Activated CD8-positive, alpha-beta T cell treated with anti-CD3 and anti-CD28 coated beads, Interleukin-2, amount 10 ng/mL, durations not matched to agents 7 days and 5 days (primary cell): ENCODE measurements at regions of chr2 and their contacts with region 1.

Region 1: GRCh38 chr2:112481050-112481527 is 867 bp upstream of the TTL start:
- DNase-seq: peak; percentile 90
- ATAC-seq: peak; percentile 84
- H3K4me3 Mint-ChIP-seq: peak overlapping the region; percentile 85
- H3K27ac Mint-ChIP-seq: peak overlapping the region; percentile 87
- H3K4me1 Mint-ChIP-seq: peaks cover 19% of the 10 kb centered on the region
- H3K27me3 Mint-ChIP-seq: peaks cover 2% of the 10 kb centered on the region

Region 2: DNA sequence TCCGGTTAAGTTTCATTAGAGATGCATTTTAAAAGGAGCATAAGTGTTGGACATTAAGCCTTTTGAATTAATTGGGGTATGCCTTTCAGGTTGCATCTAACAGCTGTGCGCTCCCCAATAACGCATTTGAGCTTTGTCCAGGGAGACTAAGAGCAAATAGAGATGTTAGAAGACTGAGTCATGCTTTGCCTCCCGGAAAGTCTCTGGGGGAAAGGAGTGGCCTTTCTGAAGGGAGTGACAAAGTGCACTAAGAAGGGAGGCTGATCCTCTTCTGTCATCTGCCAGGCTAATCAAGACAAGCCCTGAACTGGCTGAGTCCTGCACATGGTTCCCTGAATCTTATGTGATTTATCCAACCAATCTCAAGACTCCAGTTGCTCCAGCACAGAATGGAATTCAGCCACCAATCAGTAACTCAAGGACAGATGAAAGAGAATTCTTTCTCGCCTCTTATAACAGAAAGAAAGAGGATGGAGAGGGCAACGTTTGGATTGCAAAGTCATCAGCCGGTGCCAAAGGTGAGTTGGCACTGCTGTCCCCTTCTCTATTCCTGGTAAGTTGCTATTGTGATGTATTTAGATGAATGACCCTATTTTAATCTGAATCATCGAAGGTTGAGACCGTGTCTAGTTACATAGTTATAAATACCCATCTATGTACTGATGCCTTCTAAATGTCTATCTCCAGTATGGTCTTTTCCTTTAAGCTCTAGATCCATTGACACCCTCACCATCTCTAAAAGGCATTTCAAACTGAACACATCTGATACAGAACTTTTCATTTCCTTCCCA is 13.0 kb after region 1 on chr2:
- CTCF ChIA-PET with region 1: interaction called, 29 read pairs
- POLR2A ChIA-PET with region 1: interaction called, 3 read pairs
- DNase-seq: no peak
- ATAC-seq: no peak
- H3K4me3 Mint-ChIP-seq: no peak overlapping the region
- H3K27ac Mint-ChIP-seq: no peak overlapping the region
- H3K4me1 Mint-ChIP-seq: no peaks in the 10 kb centered on the region
- H3K27me3 Mint-ChIP-seq: no peaks in the 10 kb centered on the region

Region 3: GRCh38 chr2:112584134-112584890 is 103.2 kb after region 1 on chr2 and contains the start of gene CHCHD5:
- CTCF ChIA-PET with region 1: interaction called, 24 read pairs
- POLR2A ChIA-PET with region 1: interaction called, 3 read pairs
- DNase-seq: peak; percentile 98
- ATAC-seq: peak; percentile 92
- H3K4me3 Mint-ChIP-seq: peak within 1 kb of the TSS; percentile 95
- H3K27ac Mint-ChIP-seq: peak within 1 kb of the TSS; percentile 99
- H3K4me1 Mint-ChIP-seq: peaks cover 29% of the 10 kb centered on the region
- H3K27me3 Mint-ChIP-seq: no peaks in the 10 kb centered on the region
- total RNA-seq, gene CHCHD5: 32.4 to 35.4 TPM